Activated T-helper 1 cell treated with anti-CD3 and anti-CD28 coated beads, Interleukin-12 subunit alpha, Interleukin-12 subunit beta, Interleukin-2, Interleukin-4 antibody, amounts not matched to agents 30 ng/mL and 10 ng/mL and 1 ng/mL, durations not matched to agents 14 hours and 24 hours and 36 hours (primary cell): ENCODE measurements at regions of chr2 and their contacts with region 1.

Region 1: DNA sequence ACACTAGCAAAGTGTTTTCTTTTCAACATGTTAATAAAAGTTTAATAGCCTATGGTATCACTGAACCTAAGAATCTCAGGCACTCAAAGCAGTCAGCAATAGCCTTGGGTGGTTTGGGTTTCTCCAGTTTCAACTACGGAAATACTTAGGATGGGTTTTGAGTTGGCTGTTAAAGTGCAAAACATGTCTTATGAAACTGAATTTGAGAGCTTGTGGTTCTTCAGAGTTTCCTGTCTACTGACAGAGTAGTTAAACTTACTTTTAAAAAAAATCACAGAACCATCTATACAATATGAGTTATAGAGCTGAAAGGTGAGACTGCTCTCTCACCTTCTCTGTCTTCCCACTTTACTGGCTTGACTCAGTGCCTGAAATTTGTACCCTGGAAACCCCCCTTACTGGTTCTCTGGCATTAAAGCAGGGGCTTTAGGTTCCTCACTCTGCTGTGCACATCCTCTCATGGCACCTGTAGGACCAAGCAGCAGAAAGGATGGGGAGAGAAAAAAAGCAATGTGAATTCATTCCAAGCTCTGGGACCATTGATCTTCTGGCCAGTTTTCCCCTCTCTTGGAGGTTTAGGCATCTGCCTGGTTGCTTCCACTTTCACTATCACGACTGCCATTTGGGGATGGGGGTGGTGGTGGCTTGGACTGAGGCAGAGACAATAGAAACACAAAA is 18.1 kb downstream of the CCDC141 start:
- DNase-seq: peak; percentile 27
- H3K4me3 Mint-ChIP-seq: peak overlapping the region; percentile 62
- H3K27ac Mint-ChIP-seq: peak overlapping the region; percentile 82
- H3K4me1 Mint-ChIP-seq: peaks cover 29% of the 10 kb centered on the region
- H3K27me3 Mint-ChIP-seq: no peaks in the 10 kb centered on the region

Region 2: GRCh38 chr2:178530625-178531142 is 501.2 kb before region 1 on chr2:
- intact Hi-C with region 1: loop called (anchors 5 kb)
- DNase-seq: peak; percentile 44
- H3K4me3 Mint-ChIP-seq: peak overlapping the region; percentile 1
- H3K27ac Mint-ChIP-seq: peak overlapping the region; percentile 60
- H3K4me1 Mint-ChIP-seq: peaks cover 43% of the 10 kb centered on the region
- H3K27me3 Mint-ChIP-seq: no peaks in the 10 kb centered on the region

Region 3: DNA sequence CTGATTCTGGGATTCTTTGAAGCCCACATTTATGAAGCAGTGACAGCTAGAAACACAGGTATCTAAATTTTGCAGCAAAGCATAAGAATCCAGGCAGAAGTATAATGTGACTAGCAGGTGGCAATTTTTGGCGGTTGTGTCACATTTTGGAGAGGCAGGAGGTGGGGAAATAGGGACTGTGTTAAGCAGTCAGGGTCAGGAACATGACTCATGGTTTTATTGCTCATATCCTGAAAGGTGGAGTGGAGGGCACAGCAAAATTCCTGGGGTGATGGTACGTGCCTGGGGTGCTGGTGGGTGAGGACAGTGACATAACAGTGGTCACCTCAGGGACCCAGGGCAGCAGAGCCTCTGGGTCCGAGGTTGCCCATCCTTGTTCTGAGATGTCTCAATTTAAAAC is 161.2 kb before region 1 on chr2:
- intact Hi-C with region 1: loop called (anchors 5 kb)
- DNase-seq: no peak
- H3K4me3 Mint-ChIP-seq: no peak overlapping the region
- H3K27ac Mint-ChIP-seq: no peak overlapping the region
- H3K4me1 Mint-ChIP-seq: peaks cover 20% of the 10 kb centered on the region
- H3K27me3 Mint-ChIP-seq: no peaks in the 10 kb centered on the region

Region 4: DNA sequence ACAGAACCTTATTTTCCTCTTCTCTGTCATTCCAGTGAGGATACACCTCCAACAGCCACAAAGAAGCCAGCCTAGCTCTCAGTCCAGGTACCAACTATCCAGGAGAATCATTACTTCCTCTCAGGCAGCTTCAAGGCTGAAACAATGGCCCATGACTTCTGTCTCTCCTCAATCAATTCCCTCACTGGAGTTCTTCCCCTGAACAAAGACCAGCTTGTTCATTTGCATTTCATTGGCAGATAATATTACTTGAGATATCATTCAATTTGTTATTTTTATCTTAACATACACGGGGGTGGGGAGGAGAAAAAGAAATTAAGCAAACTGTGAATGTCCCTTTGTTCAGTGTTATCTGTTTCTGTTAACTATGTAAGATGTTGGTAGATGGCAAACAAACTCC is 25.9 kb before region 1 on chr2:
- intact Hi-C with region 1: no loop called
- DNase-seq: no peak
- H3K4me3 Mint-ChIP-seq: no peak overlapping the region
- H3K27ac Mint-ChIP-seq: no peak overlapping the region
- H3K4me1 Mint-ChIP-seq: no peaks in the 10 kb centered on the region
- H3K27me3 Mint-ChIP-seq: no peaks in the 10 kb centered on the region

Region 5: GRCh38 chr2:179059026-179059700 is 27.3 kb after region 1 on chr2:
- intact Hi-C with region 1: no loop called
- DNase-seq: no peak
- H3K4me3 Mint-ChIP-seq: no peak overlapping the region
- H3K27ac Mint-ChIP-seq: no peak overlapping the region
- H3K4me1 Mint-ChIP-seq: no peaks in the 10 kb centered on the region
- H3K27me3 Mint-ChIP-seq: no peaks in the 10 kb centered on the region

Region 6: GRCh38 chr2:179106676-179107428 is 75.0 kb after region 1 on chr2:
- intact Hi-C with region 1: loop called (anchors 1 kb)
- DNase-seq: no peak
- H3K4me3 Mint-ChIP-seq: peak overlapping the region; percentile 32
- H3K27ac Mint-ChIP-seq: peak overlapping the region; percentile 29
- H3K4me1 Mint-ChIP-seq: peaks cover 46% of the 10 kb centered on the region
- H3K27me3 Mint-ChIP-seq: no peaks in the 10 kb centered on the region

Region 7: DNA sequence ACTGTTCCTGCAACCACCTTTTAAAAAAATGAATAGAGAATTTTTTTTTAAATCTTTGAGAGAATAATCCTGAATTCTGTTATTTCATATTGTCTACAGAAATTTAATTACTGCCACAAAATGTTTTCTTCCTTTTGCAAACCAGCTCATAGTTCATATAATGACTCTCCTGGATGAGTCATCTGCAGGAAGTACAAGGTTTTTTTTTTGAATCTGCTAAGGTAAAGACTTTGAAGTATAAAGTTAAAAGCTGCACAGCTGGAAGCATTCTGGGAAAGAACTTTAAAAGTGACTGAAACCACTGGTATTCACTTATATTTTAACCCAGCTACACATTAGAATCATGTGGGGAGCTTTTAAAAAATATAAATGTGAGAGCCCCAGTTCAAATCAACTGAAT is 207.3 kb after region 1 on chr2:
- intact Hi-C with region 1: loop called (anchors 5 kb)
- DNase-seq: no peak
- H3K4me3 Mint-ChIP-seq: no peak overlapping the region
- H3K27ac Mint-ChIP-seq: no peak overlapping the region
- H3K4me1 Mint-ChIP-seq: peaks cover 64% of the 10 kb centered on the region
- H3K27me3 Mint-ChIP-seq: peaks cover 2% of the 10 kb centered on the region

Region 8: GRCh38 chr2:179264368-179265081 is 232.7 kb after region 1 on chr2 and contains the start of gene SESTD1:
- intact Hi-C with region 1: loop called (anchors 1 kb)
- DNase-seq: peak; percentile 62
- H3K4me3 Mint-ChIP-seq: peak within 1 kb of the TSS; percentile 87
- H3K27ac Mint-ChIP-seq: peak within 1 kb of the TSS; percentile 79
- H3K4me1 Mint-ChIP-seq: peaks cover 34% of the 10 kb centered on the region
- H3K27me3 Mint-ChIP-seq: peaks cover 41% of the 10 kb centered on the region
- total RNA-seq, gene SESTD1: 9.6 and 12.4 TPM in 2 replicates

Region 9: DNA sequence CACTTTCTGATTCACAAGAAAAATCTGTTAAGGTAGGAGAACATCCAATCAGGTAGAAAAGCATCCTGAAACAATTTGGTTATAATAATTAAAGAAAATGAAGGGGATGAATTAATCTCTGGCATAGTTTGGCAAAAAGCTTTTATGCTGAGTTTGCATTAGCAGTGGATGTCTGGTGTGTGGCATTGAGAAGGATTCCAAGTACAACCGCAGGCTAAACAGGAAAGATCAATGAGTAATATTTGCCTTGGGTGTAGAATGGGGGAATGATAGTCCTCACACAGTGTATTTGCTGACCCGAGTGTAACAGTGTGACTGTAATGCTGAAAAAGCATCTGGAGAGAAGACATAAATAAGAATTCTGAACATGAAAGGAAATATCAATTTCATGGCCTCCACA is 301.0 kb after region 1 on chr2:
- intact Hi-C with region 1: no loop called
- DNase-seq: no peak
- H3K4me3 Mint-ChIP-seq: no peak overlapping the region
- H3K27ac Mint-ChIP-seq: no peak overlapping the region
- H3K4me1 Mint-ChIP-seq: no peaks in the 10 kb centered on the region
- H3K27me3 Mint-ChIP-seq: peaks cover 16% of the 10 kb centered on the region